ENCODE measurements at regions of chr10 and their contacts with region 1.

Region 1: GRCh38 chr10:123429706-123430221 is 236.4 kb upstream of the GPR26 start:
- DNase-seq: peak; percentile 48
- H3K4me3 ChIP-seq: no peak overlapping the region
- H3K27ac ChIP-seq: peak overlapping the region in 1 of 2 experiments; percentile 58; a peak in 1 of 4 replicates
- H3K4me1 ChIP-seq: peaks cover 0 to 18% of the 10 kb centered on the region in 2 experiments; a peak in 2 of 4 replicates
- H3K27me3 ChIP-seq: no peaks in the 10 kb centered on the region
- CTCF ChIP-seq: no peak
- EP300 ChIP-seq: no peak
- RAD21 ChIP-seq: peak; percentile 44; the same call in 1 of the 2 replicates

Region 2: GRCh38 chr10:123284022-123284421 is 145.7 kb before region 1 on chr10:
- CTCF ChIA-PET with region 1: no interaction called
- POLR2A ChIA-PET with region 1: no interaction called
- DNase-seq: no peak
- H3K4me3 ChIP-seq: no peak overlapping the region
- H3K27ac ChIP-seq: no peak overlapping the region
- H3K4me1 ChIP-seq: peaks cover 0 to 11% of the 10 kb centered on the region in 2 experiments; a peak in 2 of 4 replicates
- H3K27me3 ChIP-seq: no peaks in the 10 kb centered on the region
- CTCF ChIP-seq: no peak
- EP300 ChIP-seq: no peak
- RAD21 ChIP-seq: no peak

Region 3: GRCh38 chr10:123417414-123417813 is 12.3 kb before region 1 on chr10:
- CTCF ChIA-PET with region 1: interaction called, 24 read pairs
- POLR2A ChIA-PET with region 1: no interaction called
- DNase-seq: no peak
- H3K4me3 ChIP-seq: no peak overlapping the region
- H3K27ac ChIP-seq: no peak overlapping the region
- H3K4me1 ChIP-seq: no peaks in the 10 kb centered on the region
- H3K27me3 ChIP-seq: no peaks in the 10 kb centered on the region
- CTCF ChIP-seq: no peak
- EP300 ChIP-seq: no peak
- RAD21 ChIP-seq: no peak

Measured in SK-N-SH (cell line).